ENCODE measurements at regions of chrX and their contacts with region 1.

Region 1: DNA sequence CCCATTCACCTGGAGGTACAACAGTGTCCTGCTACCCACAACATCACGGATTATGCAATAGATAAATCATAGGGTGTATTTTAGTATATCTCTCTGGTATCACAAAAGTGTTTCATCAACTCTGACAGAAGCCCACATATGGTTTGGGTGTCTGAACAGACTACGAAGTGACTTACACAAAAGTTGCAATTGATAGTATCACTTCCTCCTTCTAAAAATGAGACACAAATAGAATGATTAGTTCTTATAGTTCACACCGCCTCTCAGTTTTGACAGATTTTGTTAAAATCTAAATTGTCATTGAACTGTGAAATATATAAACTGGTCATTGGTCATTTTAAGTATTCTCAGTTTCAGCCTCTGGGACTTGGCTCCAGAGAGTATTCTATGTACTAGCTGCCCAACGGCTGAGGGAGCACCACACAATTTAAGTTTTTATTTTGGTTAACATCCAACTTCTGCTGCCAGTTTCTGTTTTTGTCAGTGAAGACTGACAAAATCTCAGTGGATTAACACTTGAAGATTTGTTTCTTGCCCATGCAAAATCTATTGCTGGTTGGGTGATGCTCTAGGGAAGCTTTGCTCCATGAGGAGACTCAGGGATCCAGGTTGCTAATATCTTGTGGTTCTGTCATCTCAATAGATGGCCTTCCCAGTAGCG is 113.8 kb upstream of the PUDP start:
- DNase-seq: no peak
- ATAC-seq: no peak
- H3K4me3 ChIP-seq: no peak overlapping the region
- H3K27ac ChIP-seq: no peak overlapping the region
- H3K4me1 ChIP-seq: peaks cover 13% of the 10 kb centered on the region; the same call in 1 of the 2 replicates
- H3K27me3 ChIP-seq: no peaks in the 10 kb centered on the region
- CTCF ChIP-seq: no peak

Region 2: GRCh38 chrX:7147978-7148824 is 113.6 kb before region 1 on chrX and contains the start of gene PUDP:
- CTCF ChIA-PET with region 1: no interaction called
- POLR2A ChIA-PET with region 1: no interaction called
- intact Hi-C with region 1: no loop called
- DNase-seq: peak; percentile 84
- ATAC-seq: peak; percentile 78
- H3K4me3 ChIP-seq: peak within 1 kb of the TSS; percentile 96
- H3K27ac ChIP-seq: peak within 1 kb of the TSS; percentile 68
- H3K4me1 ChIP-seq: peaks cover 30% of the 10 kb centered on the region
- H3K27me3 ChIP-seq: no peaks in the 10 kb centered on the region
- CTCF ChIP-seq: peak; percentile 26; the same call in 1 of the 2 replicates
- total RNA-seq, gene PUDP: 7.6 and 7.8 TPM in 2 replicates

Region 3: DNA sequence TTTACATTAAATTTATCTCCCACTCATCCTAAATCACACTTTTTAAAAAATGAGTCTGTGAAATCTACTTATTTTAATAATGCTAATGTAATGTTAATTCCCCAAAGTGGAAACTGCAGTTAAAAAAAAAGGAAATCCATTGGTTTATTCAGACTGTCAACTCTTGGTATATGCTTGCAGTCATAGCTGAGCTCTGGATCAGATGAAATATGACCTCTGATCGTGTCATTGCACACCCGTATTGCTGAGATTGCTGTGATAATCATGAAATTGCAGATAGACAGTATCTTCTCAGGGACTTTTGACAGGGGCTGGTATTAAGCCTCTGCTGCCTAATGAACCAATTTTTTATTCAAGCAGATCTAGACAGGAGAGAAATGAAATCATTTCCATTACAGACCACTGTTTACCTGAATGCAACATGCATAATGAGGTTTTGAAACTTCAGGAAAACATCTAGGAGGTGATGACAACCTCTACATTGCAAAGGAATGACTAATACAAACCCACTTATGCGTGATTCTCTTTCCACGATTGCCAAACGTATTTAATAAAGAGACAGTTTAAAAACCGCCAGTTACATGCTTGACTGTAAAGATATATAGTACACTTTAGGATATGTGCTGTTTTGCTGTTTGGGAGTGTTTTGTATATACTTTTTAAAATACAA is 24.5 kb after region 1 on chrX:
- CTCF ChIA-PET with region 1: no interaction called
- POLR2A ChIA-PET with region 1: interaction called, 45 read pairs
- intact Hi-C with region 1: no loop called
- DNase-seq: peak; percentile 27
- ATAC-seq: no peak
- H3K4me3 ChIP-seq: no peak overlapping the region
- H3K27ac ChIP-seq: no peak overlapping the region
- H3K4me1 ChIP-seq: no peaks in the 10 kb centered on the region
- H3K27me3 ChIP-seq: no peaks in the 10 kb centered on the region
- CTCF ChIP-seq: no peak

Measured in PC-3 (cell line).